Heart right ventricle (tissue), 16 donors: ENCODE measurements at regions of chr5 and their contacts with region 1.

Region 1: GRCh38 chr5:5795074-5795771 is 372.7 kb downstream of the ICE1 start:
- DNase-seq: peak; percentile 41 to 74
- ATAC-seq: peak; percentile 89 to 99 (median 96)
- H3K4me3 ChIP-seq: no peak overlapping the region
- H3K27ac ChIP-seq: peak overlapping the region in 8 of 10 donors; percentile 22 to 80 (median 54)
- H3K4me1 ChIP-seq: peaks cover 0 to 38% (median 3%) of the 10 kb centered on the region in 9 donors
- H3K27me3 ChIP-seq: no peaks in the 10 kb centered on the region
- CTCF ChIP-seq: no peak

Region 2: GRCh38 chr5:5688194-5688924 is 106.9 kb before region 1 on chr5:
- intact Hi-C with region 1: loop called in 1 of 10 experiments (anchors 5 kb)
- DNase-seq: peak in 1 of 2 donors; percentile 51
- ATAC-seq: peak; percentile 70 to 92 (median 80)
- H3K4me3 ChIP-seq: peak overlapping the region in 4 of 10 donors; percentile 5 to 21 (median 15)
- H3K27ac ChIP-seq: peak overlapping the region in 7 of 10 donors; percentile 31 to 70 (median 46)
- H3K4me1 ChIP-seq: peaks cover 0 to 35% (median 8%) of the 10 kb centered on the region in 9 donors
- H3K27me3 ChIP-seq: no peaks in the 10 kb centered on the region
- CTCF ChIP-seq: no peak